ENCODE measurements at regions of chr1 and their contacts with region 1.

Region 1: DNA sequence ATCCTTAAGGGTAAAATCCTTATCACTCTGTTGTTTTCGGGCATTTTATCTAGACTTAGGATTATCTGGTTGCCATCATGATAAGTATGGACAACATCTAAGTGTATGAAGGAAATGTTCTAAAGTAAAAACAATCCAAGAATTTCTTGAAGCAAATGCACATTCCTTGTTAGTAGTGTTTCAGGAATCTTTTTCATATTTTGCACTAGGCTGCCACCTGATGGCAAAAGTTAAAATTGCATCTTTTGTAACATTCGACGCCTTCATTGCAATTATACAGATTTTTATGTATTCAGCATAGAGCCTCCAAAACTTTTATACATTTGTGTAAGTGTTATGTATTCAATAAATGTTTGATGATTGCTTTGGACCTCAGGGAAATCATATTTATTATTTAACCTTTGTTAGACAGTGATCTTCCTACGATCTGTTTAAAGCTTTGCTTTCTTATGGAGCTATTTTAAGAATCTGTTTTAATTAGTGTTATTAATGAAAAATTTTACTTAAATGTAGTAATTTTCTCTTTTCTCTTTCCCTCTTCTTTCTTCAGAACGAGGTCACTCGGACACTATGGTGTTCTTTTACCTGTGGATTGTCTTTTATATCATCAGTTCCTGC is 49.4 kb upstream of the KIAA1614 start:
- DNase-seq: peak; percentile 62
- H3K4me3 ChIP-seq: no peak overlapping the region
- H3K27ac ChIP-seq: no peak overlapping the region
- H3K4me1 ChIP-seq: peaks cover 5% of the 10 kb centered on the region
- H3K27me3 ChIP-seq: no peaks in the 10 kb centered on the region

Region 2: GRCh38 chr1:180482425-180483275 is 380.6 kb before region 1 on chr1:
- in situ Hi-C with region 1: no loop called
- DNase-seq: peak; percentile 74
- H3K4me3 ChIP-seq: peak overlapping the region; percentile 23; the same call in 1 of the 2 replicates
- H3K27ac ChIP-seq: no peak overlapping the region
- H3K4me1 ChIP-seq: no peaks in the 10 kb centered on the region
- H3K27me3 ChIP-seq: no peaks in the 10 kb centered on the region

Region 3: DNA sequence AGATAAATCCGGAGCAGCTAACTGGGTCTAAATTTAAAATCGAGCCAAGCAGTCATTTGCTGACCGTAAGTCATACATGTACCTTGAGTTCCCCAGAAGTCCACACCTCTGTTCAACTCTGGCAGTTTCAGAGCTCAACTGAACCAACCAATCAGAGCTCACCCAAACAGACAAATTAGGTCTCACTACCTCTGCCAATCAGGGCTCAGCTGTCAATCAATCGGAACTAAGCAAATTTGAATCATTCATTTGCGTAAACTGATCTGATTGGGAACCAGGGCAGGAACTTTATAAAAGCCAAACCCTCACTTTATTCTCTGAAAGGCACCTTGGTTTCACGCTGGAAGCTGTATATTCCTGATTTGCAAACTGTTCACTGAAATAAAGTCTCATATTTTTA is 349.7 kb before region 1 on chr1:
- in situ Hi-C with region 1: loop called (anchors 5 kb)
- DNase-seq: no peak
- H3K4me3 ChIP-seq: no peak overlapping the region
- H3K27ac ChIP-seq: no peak overlapping the region
- H3K4me1 ChIP-seq: peaks cover 12% of the 10 kb centered on the region
- H3K27me3 ChIP-seq: no peaks in the 10 kb centered on the region

Region 4: GRCh38 chr1:180623579-180624347 is 239.5 kb before region 1 on chr1:
- in situ Hi-C with region 1: loop called (anchors 10 kb)
- DNase-seq: peak; percentile 64
- H3K4me3 ChIP-seq: no peak overlapping the region
- H3K27ac ChIP-seq: no peak overlapping the region
- H3K4me1 ChIP-seq: no peaks in the 10 kb centered on the region
- H3K27me3 ChIP-seq: peaks cover 13% of the 10 kb centered on the region; the same call in 1 of the 2 replicates